MCF 10A (cell line): ENCODE measurements at regions of chr15 and their contacts with region 1.

Region 1: GRCh38 chr15:74193305-74193718 is 9.3 kb downstream of the STRA6 start:
- DNase-seq: peak; percentile 90
- H3K4me3 Mint-ChIP-seq: no peak overlapping the region
- H3K27ac Mint-ChIP-seq: no peak overlapping the region
- H3K4me1 Mint-ChIP-seq: peaks cover 8% of the 10 kb centered on the region
- H3K27me3 Mint-ChIP-seq: no peaks in the 10 kb centered on the region
- CTCF ChIP-seq: no peak

Region 2: DNA sequence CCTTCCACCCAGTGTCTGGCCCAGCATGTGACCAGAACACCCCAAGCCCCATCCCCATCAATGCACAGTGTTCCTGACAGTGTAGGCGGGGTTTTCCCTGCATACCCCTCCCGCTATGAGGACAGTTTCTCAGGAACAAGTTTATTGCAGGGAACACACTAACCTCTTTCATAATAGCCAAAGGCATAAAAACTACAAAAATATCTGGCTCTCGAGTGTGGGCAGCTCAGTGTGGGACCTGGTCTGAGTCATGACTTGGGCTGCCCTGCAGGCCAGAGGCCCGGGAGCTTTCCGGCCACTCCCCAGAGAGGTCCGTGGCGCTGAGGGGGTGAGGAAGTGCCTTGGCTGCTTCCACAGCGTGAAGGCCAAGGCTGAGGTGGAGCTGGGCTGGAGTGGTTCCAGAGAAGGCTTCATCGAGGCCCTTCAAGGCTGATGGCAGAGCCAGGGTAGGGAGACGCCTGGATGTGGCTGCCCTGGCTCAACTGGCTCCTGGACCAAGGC is 13.9 kb before region 1 on chr15:
- CTCF ChIA-PET with region 1: interaction called, 3 read pairs
- POLR2A ChIA-PET with region 1: no interaction called
- intact Hi-C with region 1: loop called (anchors 2 kb)
- DNase-seq: peak; percentile 98
- H3K4me3 Mint-ChIP-seq: no peak overlapping the region
- H3K27ac Mint-ChIP-seq: peak overlapping the region; percentile 41
- H3K4me1 Mint-ChIP-seq: peaks cover 38% of the 10 kb centered on the region
- H3K27me3 Mint-ChIP-seq: no peaks in the 10 kb centered on the region
- CTCF ChIP-seq: no peak